ENCODE measurements at regions of chr10 and their contacts with region 1.

Region 1: GRCh38 chr10:91006001-91006751 is 85.3 kb upstream of the ANKRD1 start:
- DNase-seq: peak in 8 of 10 donors; percentile 16 to 78 (median 51)
- H3K4me3 ChIP-seq: peak overlapping the region in 11 of 59 donors; percentile 0 to 29 (median 10)
- H3K27ac ChIP-seq: peak overlapping the region; percentile 29 to 98 (median 91)
- H3K27me3 ChIP-seq: no peaks in the 10 kb centered on the region
- CTCF ChIP-seq: peak; percentile 85 to 100 (median 96)

Region 2: DNA sequence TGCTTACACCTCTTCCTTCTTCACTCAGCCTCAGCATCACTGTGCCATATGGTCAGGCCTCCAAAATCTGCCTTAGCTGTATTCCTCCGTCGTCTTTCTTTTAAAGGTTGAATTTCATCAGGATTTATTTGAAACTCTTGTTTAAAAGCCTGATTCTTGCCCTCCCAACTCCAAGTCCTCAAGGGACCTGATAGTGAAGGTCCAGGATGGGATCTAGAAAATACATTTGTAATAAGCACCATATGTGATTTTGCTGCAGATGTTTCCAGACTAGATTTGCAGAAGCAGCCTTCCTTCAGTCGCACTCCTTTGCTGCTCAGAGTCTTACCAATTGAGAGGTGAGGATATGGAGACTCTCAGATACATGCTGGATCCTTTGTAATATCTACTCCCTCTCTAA is 15.7 kb after region 1 on chr10:
- intact Hi-C with region 1: loop called in 1 of 2 experiments (anchors 2 kb)
- DNase-seq: no peak
- H3K4me3 ChIP-seq: no peak overlapping the region
- H3K27ac ChIP-seq: peak overlapping the region in 57 of 59 donors; percentile 60 to 98 (median 94)
- H3K27me3 ChIP-seq: no peaks in the 10 kb centered on the region
- CTCF ChIP-seq: no peak

Region 3: GRCh38 chr10:91088300-91089140 is 82.3 kb after region 1 on chr10:
- intact Hi-C with region 1: loop called in 1 of 2 experiments (anchors 5 kb)
- DNase-seq: no peak
- H3K4me3 ChIP-seq: no peak overlapping the region
- H3K27ac ChIP-seq: peak overlapping the region in 9 of 59 donors; percentile 8 to 53 (median 32)
- H3K27me3 ChIP-seq: no peaks in the 10 kb centered on the region
- CTCF ChIP-seq: peak in 48 of 56 donors; percentile 13 to 69 (median 43)